Calu3 (cell line): ENCODE measurements at regions of chr5 and their contacts with region 1.

Region 1: GRCh38 chr5:157059093-157059539 is at the start of gene HAVCR1:
- DNase-seq: peak; percentile 64
- H3K4me3 Mint-ChIP-seq: peak within 1 kb of the TSS; percentile 29
- H3K27ac Mint-ChIP-seq: peak within 1 kb of the TSS; percentile 92
- H3K4me1 Mint-ChIP-seq: peaks cover 62% of the 10 kb centered on the region
- H3K27me3 Mint-ChIP-seq: no peaks in the 10 kb centered on the region
- CTCF ChIP-seq: no peak
- total RNA-seq, gene HAVCR1: 5.8 and 6.0 TPM in 2 replicates

Region 2: GRCh38 chr5:156698323-156698722 is 360.8 kb before region 1 on chr5:
- CTCF ChIA-PET with region 1: no interaction called
- intact Hi-C with region 1: loop called (anchors 10 kb)
- DNase-seq: no peak
- H3K4me3 Mint-ChIP-seq: no peak overlapping the region
- H3K27ac Mint-ChIP-seq: no peak overlapping the region
- H3K4me1 Mint-ChIP-seq: peaks cover 27% of the 10 kb centered on the region
- H3K27me3 Mint-ChIP-seq: no peaks in the 10 kb centered on the region
- CTCF ChIP-seq: no peak

Region 3: DNA sequence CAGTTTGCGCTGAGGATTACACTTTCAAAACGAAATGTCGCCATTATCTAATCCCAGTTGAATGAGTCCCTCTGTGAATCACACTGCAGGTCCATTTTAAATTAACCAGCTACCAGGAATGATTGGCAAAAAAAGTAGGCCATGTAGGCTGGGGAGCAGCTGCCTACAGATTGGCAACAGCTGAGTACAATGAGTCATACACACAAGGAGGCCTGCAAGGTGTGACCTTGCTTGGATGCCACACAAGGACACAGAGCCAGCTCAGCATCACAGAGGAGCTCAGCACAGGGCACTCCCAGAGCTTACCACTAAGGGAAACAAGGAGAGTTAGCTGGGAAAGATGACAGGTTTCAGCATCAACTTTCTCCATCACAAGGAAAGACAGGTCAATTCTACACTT is 13.1 kb before region 1 on chr5:
- CTCF ChIA-PET with region 1: interaction called, 18 read pairs
- intact Hi-C with region 1: loop called (anchors 1 kb)
- DNase-seq: peak; percentile 85
- H3K4me3 Mint-ChIP-seq: peak overlapping the region; percentile 44
- H3K27ac Mint-ChIP-seq: peak overlapping the region; percentile 98
- H3K4me1 Mint-ChIP-seq: peaks cover 62% of the 10 kb centered on the region
- H3K27me3 Mint-ChIP-seq: no peaks in the 10 kb centered on the region
- CTCF ChIP-seq: no peak